ENCODE measurements at regions of chr19 and their contacts with region 1.

Region 1: GRCh38 chr19:42325273-42325895 is at the start of gene MEGF8:
- DNase-seq: peak; percentile 100
- H3K4me3 ChIP-seq: peak within 1 kb of the TSS; percentile 50 to 78 (median 69)
- H3K27ac ChIP-seq: no peak within 1 kb of the TSS
- H3K4me1 ChIP-seq: peaks cover 8% of the 10 kb centered on the region
- H3K27me3 ChIP-seq: peaks cover 19 to 27% of the 10 kb centered on the region in 2 experiments
- CTCF ChIP-seq: peak; percentile 90 to 96
- POLR2A ChIP-seq: no peak
- total RNA-seq, gene MEGF8: 34.3 and 39.6 TPM in 2 replicates

Region 2: GRCh38 chr19:41904118-41904870 is 421.1 kb before region 1 on chr19:
- CTCF ChIA-PET with region 1: no interaction called
- POLR2A ChIA-PET with region 1: no interaction called
- dilution Hi-C with region 1: no loop called
- intact Hi-C with region 1: no loop called
- DNase-seq: no peak
- H3K4me3 ChIP-seq: no peak overlapping the region
- H3K27ac ChIP-seq: no peak overlapping the region
- H3K4me1 ChIP-seq: no peaks in the 10 kb centered on the region
- H3K27me3 ChIP-seq: no peaks in the 10 kb centered on the region
- CTCF ChIP-seq: no peak
- POLR2A ChIP-seq: no peak

Region 3: GRCh38 chr19:42108527-42109389 is 216.6 kb before region 1 on chr19:
- CTCF ChIA-PET with region 1: no interaction called
- POLR2A ChIA-PET with region 1: no interaction called
- dilution Hi-C with region 1: no loop called
- intact Hi-C with region 1: loop called (anchors 1 kb)
- DNase-seq: peak; percentile 90
- H3K4me3 ChIP-seq: no peak overlapping the region
- H3K27ac ChIP-seq: no peak overlapping the region
- H3K4me1 ChIP-seq: peaks cover 20% of the 10 kb centered on the region
- H3K27me3 ChIP-seq: peaks cover 3% of the 10 kb centered on the region in 2 experiments
- CTCF ChIP-seq: peak; percentile 99 to 100
- POLR2A ChIP-seq: no peak

Region 4: GRCh38 chr19:42219812-42220750 is 105.3 kb before region 1 on chr19 and contains the start of gene ZNF526:
- CTCF ChIA-PET with region 1: no interaction called
- POLR2A ChIA-PET with region 1: no interaction called
- dilution Hi-C with region 1: no loop called
- intact Hi-C with region 1: loop called (anchors 1 kb)
- DNase-seq: peak; percentile 99
- H3K4me3 ChIP-seq: peak within 1 kb of the TSS; percentile 63 to 90 (median 83)
- H3K27ac ChIP-seq: peak within 1 kb of the TSS; percentile 54
- H3K4me1 ChIP-seq: peaks cover 24% of the 10 kb centered on the region
- H3K27me3 ChIP-seq: no peaks in the 10 kb centered on the region
- CTCF ChIP-seq: no peak
- POLR2A ChIP-seq: peak; percentile 74
- total RNA-seq, gene ZNF526: 13.3 and 13.4 TPM in 2 replicates

Region 5: GRCh38 chr19:42286349-42287261 is 38.8 kb before region 1 on chr19:
- CTCF ChIA-PET with region 1: no interaction called
- POLR2A ChIA-PET with region 1: no interaction called
- dilution Hi-C with region 1: no loop called
- intact Hi-C with region 1: no loop called
- DNase-seq: peak; percentile 57
- H3K4me3 ChIP-seq: no peak overlapping the region
- H3K27ac ChIP-seq: peak overlapping the region; percentile 38
- H3K4me1 ChIP-seq: peaks cover 34% of the 10 kb centered on the region
- H3K27me3 ChIP-seq: no peaks in the 10 kb centered on the region
- CTCF ChIP-seq: no peak
- POLR2A ChIP-seq: no peak

Region 6: DNA sequence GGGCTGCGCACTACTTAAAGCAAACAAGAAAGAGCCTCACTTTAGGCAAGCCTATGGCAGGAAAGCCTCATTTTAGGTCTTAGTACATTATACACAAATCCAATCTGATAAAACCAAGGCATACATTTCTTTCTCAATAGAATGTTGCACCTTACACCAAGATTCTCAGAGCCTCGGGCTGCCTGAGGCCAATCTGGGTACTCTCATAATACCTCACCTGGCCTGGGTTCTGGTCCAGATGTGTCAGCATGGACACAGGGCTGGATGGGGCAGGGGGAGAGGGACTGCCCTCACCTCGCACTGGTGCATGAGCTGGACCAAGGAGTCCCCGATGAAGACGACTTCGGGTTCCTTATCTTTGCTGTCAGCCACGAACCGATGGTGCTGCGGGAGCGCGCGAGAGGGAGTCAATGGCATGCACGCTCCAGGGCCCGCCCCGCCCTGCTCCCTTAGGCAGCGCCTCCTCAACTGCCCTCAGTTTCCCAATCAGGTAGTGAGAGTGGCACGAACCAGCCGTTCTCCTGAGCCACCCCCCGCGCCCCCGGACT is 23.7 kb before region 1 on chr19 and contains the start of gene PRR19:
- CTCF ChIA-PET with region 1: interaction called, 4 read pairs
- POLR2A ChIA-PET with region 1: no interaction called
- dilution Hi-C with region 1: no loop called
- intact Hi-C with region 1: loop called (anchors 1 kb)
- DNase-seq: no peak
- H3K4me3 ChIP-seq: peak within 1 kb of the TSS; percentile 44 to 70 (median 54)
- H3K27ac ChIP-seq: no peak within 1 kb of the TSS
- H3K4me1 ChIP-seq: peaks cover 9% of the 10 kb centered on the region
- H3K27me3 ChIP-seq: no peaks in the 10 kb centered on the region
- CTCF ChIP-seq: no peak
- POLR2A ChIP-seq: no peak
- total RNA-seq, gene PRR19: 1.0 and 1.5 TPM in 2 replicates

Region 7: DNA sequence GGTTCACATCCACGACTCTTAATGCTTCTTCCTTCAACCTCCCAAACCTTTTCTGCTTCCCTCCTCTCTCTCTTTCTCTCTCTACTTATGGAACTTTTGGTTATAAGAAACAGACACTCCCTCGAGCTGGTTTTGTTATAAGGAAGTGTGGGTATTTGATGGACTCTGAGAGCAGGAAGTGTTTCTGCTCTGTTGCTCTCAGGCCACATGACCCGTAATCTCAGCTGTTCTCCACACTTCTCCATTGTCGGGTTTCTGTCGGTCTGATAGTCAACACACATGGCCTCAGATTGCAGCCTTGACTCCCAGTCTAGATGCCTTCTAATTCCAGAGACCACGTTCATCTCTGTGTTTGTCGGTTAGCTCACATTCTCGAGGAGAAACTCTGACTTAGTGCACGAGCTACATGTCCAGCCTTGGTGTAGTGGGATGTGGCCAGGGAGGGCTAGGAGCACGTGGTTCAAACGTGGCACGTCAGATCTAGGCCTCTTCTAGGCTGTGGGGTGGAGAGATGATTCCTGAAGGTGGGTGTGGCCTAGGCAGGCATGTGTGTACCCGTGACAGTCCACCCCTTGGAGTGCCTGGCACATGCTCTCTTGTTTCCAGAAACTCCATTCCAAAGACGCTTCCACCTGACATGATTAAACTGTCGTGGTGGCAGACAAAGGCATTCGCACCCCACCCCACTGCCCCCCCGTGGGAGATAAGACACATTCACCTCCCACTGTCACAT is 38.4 kb after region 1 on chr19:
- CTCF ChIA-PET with region 1: no interaction called
- POLR2A ChIA-PET with region 1: no interaction called
- dilution Hi-C with region 1: no loop called
- intact Hi-C with region 1: no loop called
- DNase-seq: no peak
- H3K4me3 ChIP-seq: no peak overlapping the region
- H3K27ac ChIP-seq: no peak overlapping the region
- H3K4me1 ChIP-seq: no peaks in the 10 kb centered on the region
- H3K27me3 ChIP-seq: no peaks in the 10 kb centered on the region
- CTCF ChIP-seq: no peak
- POLR2A ChIP-seq: no peak